Breast epithelium (tissue), 4 donors: ENCODE measurements at regions of chr5 and their contacts with region 1.

Region 1: GRCh38 chr5:28082610-28083009 is 1044.2 kb upstream of the CDH9 start:
- DNase-seq: no peak
- H3K4me3 ChIP-seq: no peak overlapping the region
- H3K27ac ChIP-seq: no peak overlapping the region
- H3K4me1 ChIP-seq: no peaks in the 10 kb centered on the region
- H3K27me3 ChIP-seq: no peaks in the 10 kb centered on the region
- CTCF ChIP-seq: no peak
- POLR2A ChIP-seq: no peak

Region 2: DNA sequence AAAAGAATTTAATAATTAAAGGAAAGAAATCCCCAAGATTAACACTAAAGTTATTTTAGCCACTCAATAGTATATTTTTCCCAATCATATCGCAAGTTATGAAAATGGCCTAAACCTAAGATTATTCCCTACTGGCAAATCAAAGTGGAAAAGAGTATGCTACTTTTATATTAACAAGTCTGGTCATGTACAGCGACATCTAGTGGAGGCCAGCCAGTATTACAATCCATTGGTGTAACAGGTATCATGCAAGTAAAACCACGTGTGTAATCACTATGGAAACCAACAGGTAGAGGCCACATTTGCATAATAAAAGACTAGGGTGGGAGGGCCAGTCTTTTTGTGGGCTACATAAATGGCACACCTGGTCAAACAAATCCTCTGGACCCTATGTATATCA is 67.8 kb before region 1 on chr5:
- intact Hi-C with region 1: no loop called
- DNase-seq: no peak
- H3K4me3 ChIP-seq: no peak overlapping the region
- H3K27ac ChIP-seq: no peak overlapping the region
- H3K4me1 ChIP-seq: no peaks in the 10 kb centered on the region
- H3K27me3 ChIP-seq: no peaks in the 10 kb centered on the region
- CTCF ChIP-seq: no peak
- POLR2A ChIP-seq: no peak

Region 3: GRCh38 chr5:28499764-28500290 is 417.2 kb after region 1 on chr5:
- intact Hi-C with region 1: loop called (anchors 10 kb)
- DNase-seq: no peak
- H3K4me3 ChIP-seq: no peak overlapping the region
- H3K27ac ChIP-seq: no peak overlapping the region
- H3K4me1 ChIP-seq: no peaks in the 10 kb centered on the region
- H3K27me3 ChIP-seq: no peaks in the 10 kb centered on the region
- CTCF ChIP-seq: no peak
- POLR2A ChIP-seq: no peak